Activated naive CD4-positive, alpha-beta T cell treated with anti-CD3 and anti-CD28 coated beads for 36 hours (primary cell): ENCODE measurements at regions of chr6 and their contacts with region 1.

Region 1: DNA sequence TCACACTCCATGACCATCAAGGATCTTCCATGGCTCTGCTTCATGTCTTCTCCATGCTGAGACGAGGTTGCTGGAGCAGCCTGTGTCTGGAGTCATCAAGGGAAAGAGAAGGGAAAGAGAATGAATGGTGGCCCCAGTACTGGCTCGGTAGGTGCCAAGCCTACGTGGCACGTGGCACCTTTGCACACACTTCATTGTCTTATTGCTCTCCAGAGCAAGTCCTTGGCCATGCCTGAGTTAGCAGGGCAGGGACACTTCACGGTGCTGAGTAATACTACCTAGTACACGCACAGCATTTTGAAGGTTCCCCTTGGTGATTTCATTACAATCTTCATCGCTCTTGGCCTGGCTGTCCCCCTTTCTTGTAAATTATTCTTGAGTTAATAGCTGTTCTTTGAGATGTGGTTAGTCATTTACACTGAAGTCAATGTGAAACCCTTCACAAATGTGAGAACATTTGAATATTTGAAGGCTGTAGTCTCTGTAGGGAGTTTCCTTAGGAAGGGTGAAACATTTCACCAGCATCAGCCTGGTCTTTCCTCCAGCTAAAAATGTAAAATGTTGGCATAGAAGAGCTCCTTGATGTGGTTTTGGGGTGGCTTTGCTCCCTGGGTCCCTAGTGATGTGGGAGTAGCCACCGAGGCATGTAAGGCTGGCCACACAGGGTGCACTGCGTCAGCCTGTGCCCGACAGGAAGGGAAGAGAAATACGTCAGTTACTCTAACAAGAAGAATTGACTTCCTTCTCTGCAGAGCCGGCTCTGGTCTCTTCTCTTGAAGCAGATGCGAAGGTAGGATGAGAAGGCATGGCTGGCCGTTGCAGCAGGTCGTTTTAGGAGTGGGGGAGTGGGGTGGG is at the start of gene SYTL3:
- DNase-seq: peak; percentile 95
- H3K4me3 Mint-ChIP-seq: peak within 1 kb of the TSS; percentile 76
- H3K27ac Mint-ChIP-seq: peak within 1 kb of the TSS; percentile 98
- H3K4me1 Mint-ChIP-seq: peaks cover 72% of the 10 kb centered on the region
- H3K27me3 Mint-ChIP-seq: no peaks in the 10 kb centered on the region
- total RNA-seq, gene SYTL3: 115 to 120 TPM

Region 2: DNA sequence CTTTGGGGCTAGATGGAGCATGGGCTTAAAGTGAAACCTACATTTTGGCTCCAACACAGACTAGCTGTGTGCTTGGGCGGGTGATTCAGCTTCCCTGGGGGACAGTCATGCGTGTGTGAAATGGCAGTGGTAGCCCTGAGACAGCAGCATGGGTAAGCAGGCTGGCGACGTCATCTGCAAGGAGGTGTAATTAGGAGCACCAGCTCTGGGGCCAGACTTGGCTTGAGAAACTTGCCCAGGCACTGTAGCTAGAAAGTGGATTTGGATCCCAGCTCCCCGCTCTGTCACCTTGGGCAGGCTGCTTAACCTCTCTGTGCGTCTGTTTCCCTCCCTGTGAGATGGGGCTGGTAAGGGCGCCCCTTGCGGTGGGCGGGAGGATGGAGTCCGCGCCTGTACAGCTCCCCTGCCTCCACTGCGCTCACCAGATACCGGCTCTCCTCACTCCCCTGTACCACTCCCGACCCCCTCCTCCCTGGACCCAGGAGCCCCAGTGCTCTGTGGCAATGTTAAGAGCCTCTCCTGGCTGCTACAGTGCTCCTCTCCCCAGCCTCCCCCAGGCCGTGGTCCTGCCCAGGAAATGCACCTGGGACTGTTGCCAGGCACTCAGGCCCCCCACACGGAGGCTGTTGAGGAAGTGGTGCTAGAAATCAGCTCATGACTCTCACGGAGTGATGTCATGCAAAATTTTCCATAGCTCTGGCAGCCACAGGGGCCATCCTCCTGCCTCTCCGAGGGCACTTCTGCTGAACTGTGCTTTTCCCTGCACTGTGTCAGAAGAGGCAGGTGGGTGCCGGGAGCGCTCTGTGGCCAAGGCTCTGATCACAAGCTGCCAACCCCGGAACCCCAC is 623.2 kb before region 1 on chr6:
- CTCF ChIA-PET with region 1: no interaction called
- intact Hi-C with region 1: loop called (anchors 1 kb)
- DNase-seq: peak; percentile 91
- H3K4me3 Mint-ChIP-seq: peak overlapping the region; percentile 81
- H3K27ac Mint-ChIP-seq: peak overlapping the region; percentile 99
- H3K4me1 Mint-ChIP-seq: peaks cover 36% of the 10 kb centered on the region
- H3K27me3 Mint-ChIP-seq: no peaks in the 10 kb centered on the region

Region 3: DNA sequence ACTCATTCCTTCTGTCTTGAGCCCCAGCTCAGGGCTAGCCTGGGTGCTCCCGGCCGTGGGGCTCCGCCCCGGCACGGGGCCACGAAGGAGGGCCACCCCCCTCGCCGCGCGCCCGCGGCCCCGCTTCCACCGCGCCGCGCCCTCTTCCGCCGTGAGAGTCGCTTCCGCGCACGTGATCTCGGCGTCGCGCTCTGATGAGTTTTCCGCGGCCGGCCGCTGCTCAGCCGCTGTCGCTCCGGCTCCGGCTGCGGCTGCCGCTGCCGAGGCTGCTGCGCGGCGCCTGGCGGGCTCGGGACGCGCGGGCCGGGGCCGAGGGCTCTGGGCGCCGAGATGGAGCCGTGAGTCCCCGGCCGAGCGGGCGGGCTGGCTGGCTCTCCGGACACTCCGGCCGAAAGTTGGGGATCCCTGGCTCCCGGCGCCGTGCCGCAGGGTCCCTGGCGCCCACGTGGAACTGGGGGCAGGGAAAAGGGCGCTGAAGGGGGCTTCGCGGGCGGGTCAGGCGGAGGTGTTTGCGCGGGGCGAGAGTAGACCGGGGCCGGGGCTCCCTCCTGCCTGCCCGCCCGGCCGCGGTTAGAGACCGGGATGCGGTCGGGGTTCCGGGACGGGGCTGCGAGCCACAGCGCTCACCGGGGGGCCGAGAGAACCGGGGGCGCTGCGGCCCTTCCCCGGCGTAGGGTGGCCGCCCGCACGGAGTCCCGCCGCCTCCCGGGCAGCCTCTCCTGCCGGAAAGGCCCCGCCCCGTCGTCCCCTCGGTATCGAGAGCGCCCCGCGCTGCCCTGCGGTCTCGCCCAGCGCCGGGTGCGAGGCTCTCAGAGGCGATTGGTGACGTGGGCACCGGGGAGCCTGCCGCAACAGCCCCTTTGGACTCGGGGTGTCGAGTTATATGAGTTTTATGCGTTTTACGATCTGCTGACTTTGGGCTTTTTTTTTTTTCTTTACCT is 89.4 kb before region 1 on chr6 and contains the start of gene TMEM181:
- CTCF ChIA-PET with region 1: no interaction called
- intact Hi-C with region 1: loop called (anchors 1 kb)
- DNase-seq: peak; percentile 90
- H3K4me3 Mint-ChIP-seq: peak within 1 kb of the TSS; percentile 93
- H3K27ac Mint-ChIP-seq: peak within 1 kb of the TSS; percentile 84
- H3K4me1 Mint-ChIP-seq: peaks cover 35% of the 10 kb centered on the region
- H3K27me3 Mint-ChIP-seq: no peaks in the 10 kb centered on the region
- total RNA-seq, gene TMEM181: 8.3 to 8.6 TPM

Region 4: GRCh38 chr6:158718461-158719046 is 69.0 kb after region 1 on chr6:
- CTCF ChIA-PET with region 1: no interaction called
- intact Hi-C with region 1: loop called (anchors 2 kb)
- DNase-seq: no peak
- H3K4me3 Mint-ChIP-seq: no peak overlapping the region
- H3K27ac Mint-ChIP-seq: no peak overlapping the region
- H3K4me1 Mint-ChIP-seq: peaks cover 37% of the 10 kb centered on the region
- H3K27me3 Mint-ChIP-seq: no peaks in the 10 kb centered on the region

Region 5: DNA sequence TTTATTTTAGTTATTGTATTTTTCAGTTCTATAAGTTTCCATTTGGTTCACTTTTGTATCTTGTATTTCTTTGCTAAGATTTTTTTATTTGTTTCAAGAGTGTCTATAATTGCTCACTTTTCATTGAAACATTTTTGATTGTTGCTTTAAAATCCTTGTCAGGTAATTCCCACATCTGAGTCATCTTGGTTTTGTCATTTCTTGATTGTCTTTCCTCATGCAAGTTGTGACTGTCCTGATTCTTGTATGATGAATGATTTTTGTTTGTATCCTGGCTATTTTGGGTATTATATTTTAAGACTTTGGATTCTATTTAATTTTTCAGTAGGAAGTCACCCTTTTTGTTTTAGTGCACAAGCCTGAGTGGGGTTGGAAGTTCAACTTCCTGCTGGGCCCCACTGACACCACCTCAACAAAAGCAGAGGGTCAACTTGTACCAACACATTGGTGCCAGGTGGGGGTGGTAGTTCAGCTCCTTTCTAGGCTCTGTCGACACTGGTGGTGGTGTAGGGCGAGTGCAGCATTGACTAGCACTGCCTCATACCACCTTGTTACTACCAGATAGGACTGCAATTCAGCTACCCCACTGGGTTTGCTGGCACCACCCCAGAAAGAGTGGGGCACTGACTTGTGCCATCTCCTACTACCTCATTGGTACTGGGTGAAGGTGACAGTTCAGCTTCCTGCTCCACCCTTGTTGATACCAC is 341.7 kb after region 1 on chr6:
- CTCF ChIA-PET with region 1: no interaction called
- intact Hi-C with region 1: loop called (anchors 2 kb)
- DNase-seq: peak; percentile 56
- H3K4me3 Mint-ChIP-seq: no peak overlapping the region
- H3K27ac Mint-ChIP-seq: peak overlapping the region; percentile 60
- H3K4me1 Mint-ChIP-seq: peaks cover 48% of the 10 kb centered on the region
- H3K27me3 Mint-ChIP-seq: no peaks in the 10 kb centered on the region

Region 6: GRCh38 chr6:159062564-159062945 is 413.0 kb after region 1 on chr6:
- CTCF ChIA-PET with region 1: no interaction called
- intact Hi-C with region 1: loop called (anchors 1 kb)
- DNase-seq: peak; percentile 77
- H3K4me3 Mint-ChIP-seq: peak overlapping the region; percentile 6
- H3K27ac Mint-ChIP-seq: peak overlapping the region; percentile 91
- H3K4me1 Mint-ChIP-seq: peaks cover 95% of the 10 kb centered on the region
- H3K27me3 Mint-ChIP-seq: no peaks in the 10 kb centered on the region